GM10248 (cell line): ENCODE measurements at regions of chr4 and their contacts with region 1.

Region 1: GRCh38 chr4:159107203-159107925 is 4.5 kb downstream of the RAPGEF2 start:
- DNase-seq: no peak
- CTCF ChIP-seq: no peak

Region 2: GRCh38 chr4:157143369-157143768 is 1964.0 kb before region 1 on chr4:
- CTCF ChIA-PET with region 1: no interaction called
- POLR2A ChIA-PET with region 1: no interaction called
- DNase-seq: no peak
- CTCF ChIP-seq: no peak

Region 3: DNA sequence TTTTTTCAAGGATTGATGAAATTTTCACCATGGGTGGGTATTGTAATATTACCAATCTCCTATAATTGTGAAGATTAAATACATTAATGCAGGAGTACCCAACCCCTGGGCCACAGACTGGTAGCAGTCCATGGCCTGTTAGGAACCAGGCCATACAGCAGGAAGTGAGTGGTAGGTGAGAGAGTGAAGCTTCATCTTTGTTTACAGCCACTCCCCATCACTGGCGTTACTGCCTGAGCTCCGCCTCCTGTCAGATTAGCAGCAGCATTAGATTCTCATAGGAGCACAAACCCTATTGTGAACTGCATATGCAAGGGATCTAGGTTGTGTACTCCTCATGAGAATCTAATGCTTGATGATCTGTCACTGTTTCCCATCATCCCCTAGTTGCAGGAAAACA is 10.6 kb after region 1 on chr4:
- CTCF ChIA-PET with region 1: interaction called, 12 read pairs
- POLR2A ChIA-PET with region 1: no interaction called
- DNase-seq: no peak
- CTCF ChIP-seq: no peak

Region 4: GRCh38 chr4:159175085-159175988 is 68.0 kb after region 1 on chr4:
- CTCF ChIA-PET with region 1: no interaction called
- POLR2A ChIA-PET with region 1: no interaction called
- DNase-seq: peak; percentile 29
- CTCF ChIP-seq: peak; percentile 71